CD4-positive, alpha-beta T cell (primary cell): ENCODE measurements at regions of chr1 and their contacts with region 1.

Region 1: DNA sequence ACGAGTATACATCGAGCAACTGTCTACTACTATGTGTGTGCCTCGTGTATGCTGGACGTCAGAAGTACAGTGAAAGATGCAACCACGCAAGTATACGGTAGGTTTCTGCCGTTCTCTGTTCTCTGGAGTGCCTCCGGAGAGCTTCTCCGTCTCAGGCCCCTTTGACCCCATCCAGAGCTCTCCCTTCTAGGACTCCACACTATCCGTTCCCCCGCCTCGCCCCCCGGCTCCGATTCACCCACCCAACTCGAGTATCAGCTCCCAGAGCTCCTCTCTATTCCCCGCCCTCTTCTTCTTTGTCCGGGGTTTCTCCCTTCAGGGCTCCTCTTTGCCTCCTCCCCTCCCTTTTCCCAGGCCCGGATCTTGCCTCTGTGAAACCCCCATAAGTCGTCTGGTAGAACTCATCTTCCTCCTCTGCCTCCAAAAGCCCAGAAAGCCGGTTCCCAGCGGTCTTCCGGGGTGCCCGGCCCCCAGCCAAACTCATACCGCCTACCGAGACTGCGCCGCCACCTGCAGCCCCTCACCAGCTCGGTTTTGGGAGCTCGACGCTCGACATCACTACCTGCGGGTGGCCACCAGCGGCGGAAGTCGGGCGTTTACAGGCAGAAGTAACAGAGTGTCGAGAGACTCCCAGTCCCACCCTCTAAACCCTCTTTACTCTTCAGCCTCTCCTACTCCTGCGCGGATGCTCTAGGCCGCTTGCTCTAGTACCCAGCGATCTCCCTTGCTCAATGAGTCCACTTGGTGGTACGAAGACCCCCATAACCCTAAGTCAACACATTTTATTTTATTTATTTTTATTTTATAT is at the start of gene VPS72:
- DNase-seq: peak; percentile 70 to 93 (median 81)
- ATAC-seq: peak; percentile 90
- H3K4me3 ChIP-seq: peak within 1 kb of the TSS; percentile 75
- H3K4me3 Mint-ChIP-seq: peak within 1 kb of the TSS; percentile 97
- H3K27ac ChIP-seq: peak within 1 kb of the TSS; percentile 58 to 73
- H3K27ac Mint-ChIP-seq: peak within 1 kb of the TSS; percentile 90
- H3K4me1 ChIP-seq: peaks cover 24% of the 10 kb centered on the region
- H3K4me1 Mint-ChIP-seq: peaks cover 42% of the 10 kb centered on the region
- H3K27me3 ChIP-seq: no peaks in the 10 kb centered on the region
- H3K27me3 Mint-ChIP-seq: no peaks in the 10 kb centered on the region
- CTCF ChIP-seq: no peak
- total RNA-seq, gene VPS72: 12.7 to 17.2 TPM

Region 2: DNA sequence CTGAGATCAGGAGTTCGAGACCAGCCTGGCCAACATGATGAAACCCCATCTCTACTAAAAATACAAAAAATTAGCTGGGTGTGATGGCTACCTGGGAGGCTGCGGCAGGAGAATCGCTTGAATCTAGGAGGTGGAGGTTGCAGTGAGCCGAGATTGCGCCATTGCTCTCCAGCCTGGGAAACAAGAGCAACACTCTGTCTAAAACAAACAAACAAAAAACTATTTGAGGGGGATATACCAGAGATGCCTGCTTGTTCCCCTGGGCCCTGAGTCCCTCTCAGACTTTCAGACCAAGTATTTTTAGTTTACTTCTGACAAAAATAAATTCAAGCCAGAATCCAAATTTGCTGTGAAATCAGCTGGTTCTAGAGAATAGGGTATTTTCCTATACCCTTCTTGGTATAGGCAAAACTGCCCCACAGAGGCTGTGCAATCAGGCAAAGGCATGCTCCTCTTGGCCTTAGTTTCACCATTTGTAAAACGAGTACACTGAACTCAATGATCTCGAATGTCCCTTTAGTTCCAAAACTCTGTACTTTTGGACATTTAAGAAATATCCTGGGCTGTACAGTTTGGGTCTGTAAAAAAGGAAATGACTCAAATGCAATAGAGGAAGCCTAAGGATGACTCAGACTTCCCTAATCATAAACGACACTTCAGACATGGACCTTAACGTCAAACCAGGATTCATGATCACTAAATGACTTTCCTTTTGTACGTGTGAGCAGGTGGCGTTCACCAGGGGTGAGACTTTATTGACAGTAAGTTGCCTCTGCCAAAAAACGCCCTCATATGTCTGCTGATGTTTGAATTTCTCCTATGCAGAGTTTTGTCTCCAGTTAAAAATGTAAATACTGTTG is 576.6 kb before region 1 on chr1:
- CTCF ChIA-PET with region 1: no interaction called
- POLR2A ChIA-PET with region 1: no interaction called
- intact Hi-C with region 1: no loop called
- DNase-seq: peak in 10 of 14 experiments; percentile 16 to 84 (median 35)
- ATAC-seq: peak; percentile 26
- H3K4me3 ChIP-seq: no peak overlapping the region
- H3K4me3 Mint-ChIP-seq: peak overlapping the region; percentile 30
- H3K27ac ChIP-seq: peak overlapping the region; percentile 75 to 76
- H3K27ac Mint-ChIP-seq: peak overlapping the region; percentile 80
- H3K4me1 ChIP-seq: peaks cover 60% of the 10 kb centered on the region
- H3K4me1 Mint-ChIP-seq: peaks cover 55% of the 10 kb centered on the region
- H3K27me3 ChIP-seq: no peaks in the 10 kb centered on the region
- H3K27me3 Mint-ChIP-seq: no peaks in the 10 kb centered on the region
- CTCF ChIP-seq: no peak

Region 3: DNA sequence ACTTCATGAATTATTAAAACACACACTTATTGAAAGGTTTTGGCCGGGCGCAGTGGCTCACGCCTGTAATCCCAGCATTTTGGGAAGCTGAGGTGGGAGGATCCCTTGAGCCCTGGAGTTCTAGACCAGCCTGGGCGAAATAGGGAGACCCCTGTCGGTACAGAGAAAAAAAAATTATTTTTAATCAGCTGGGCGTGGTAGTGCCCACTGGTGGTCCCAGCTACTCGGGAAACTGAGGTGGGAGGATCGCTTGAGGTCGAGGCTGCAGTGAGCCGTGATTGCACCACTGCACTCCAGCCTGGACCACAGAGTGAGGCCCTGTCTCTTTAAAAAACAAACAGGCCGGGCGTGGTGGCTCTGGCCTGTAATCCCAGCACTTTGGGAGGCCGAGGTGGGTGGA is 117.6 kb before region 1 on chr1:
- CTCF ChIA-PET with region 1: no interaction called
- POLR2A ChIA-PET with region 1: no interaction called
- intact Hi-C with region 1: no loop called
- DNase-seq: no peak
- ATAC-seq: no peak
- H3K4me3 ChIP-seq: no peak overlapping the region
- H3K4me3 Mint-ChIP-seq: peak overlapping the region; percentile 99
- H3K27ac ChIP-seq: no peak overlapping the region
- H3K27ac Mint-ChIP-seq: peak overlapping the region; percentile 98
- H3K4me1 ChIP-seq: peaks cover 31% of the 10 kb centered on the region
- H3K4me1 Mint-ChIP-seq: peaks cover 30% of the 10 kb centered on the region
- H3K27me3 ChIP-seq: no peaks in the 10 kb centered on the region
- H3K27me3 Mint-ChIP-seq: no peaks in the 10 kb centered on the region
- CTCF ChIP-seq: no peak

Region 4: DNA sequence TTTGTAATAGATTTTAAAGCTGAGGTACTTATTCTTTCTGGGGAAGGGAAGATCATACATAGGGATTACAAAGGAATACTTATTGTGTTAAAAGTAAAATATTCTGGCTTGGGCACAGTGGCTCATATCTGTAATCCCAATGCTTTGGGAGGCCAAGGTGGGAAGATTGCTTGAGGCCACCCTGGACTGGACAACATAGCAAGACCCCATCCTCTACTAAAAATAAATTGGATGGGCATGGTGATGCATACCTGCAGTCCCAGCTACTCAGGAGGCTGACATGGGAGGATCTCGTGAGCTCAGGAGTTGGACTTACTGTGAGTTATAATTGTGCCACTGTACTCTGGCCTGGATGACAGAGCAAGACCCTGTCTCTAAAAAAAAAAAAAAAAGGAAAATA is 91.7 kb before region 1 on chr1:
- CTCF ChIA-PET with region 1: no interaction called
- POLR2A ChIA-PET with region 1: interaction called, 10 read pairs
- intact Hi-C with region 1: no loop called
- DNase-seq: no peak
- ATAC-seq: no peak
- H3K4me3 ChIP-seq: no peak overlapping the region
- H3K4me3 Mint-ChIP-seq: no peak overlapping the region
- H3K27ac ChIP-seq: no peak overlapping the region
- H3K27ac Mint-ChIP-seq: no peak overlapping the region
- H3K4me1 ChIP-seq: no peaks in the 10 kb centered on the region
- H3K4me1 Mint-ChIP-seq: no peaks in the 10 kb centered on the region
- H3K27me3 ChIP-seq: no peaks in the 10 kb centered on the region
- H3K27me3 Mint-ChIP-seq: no peaks in the 10 kb centered on the region
- CTCF ChIP-seq: no peak

Region 5: DNA sequence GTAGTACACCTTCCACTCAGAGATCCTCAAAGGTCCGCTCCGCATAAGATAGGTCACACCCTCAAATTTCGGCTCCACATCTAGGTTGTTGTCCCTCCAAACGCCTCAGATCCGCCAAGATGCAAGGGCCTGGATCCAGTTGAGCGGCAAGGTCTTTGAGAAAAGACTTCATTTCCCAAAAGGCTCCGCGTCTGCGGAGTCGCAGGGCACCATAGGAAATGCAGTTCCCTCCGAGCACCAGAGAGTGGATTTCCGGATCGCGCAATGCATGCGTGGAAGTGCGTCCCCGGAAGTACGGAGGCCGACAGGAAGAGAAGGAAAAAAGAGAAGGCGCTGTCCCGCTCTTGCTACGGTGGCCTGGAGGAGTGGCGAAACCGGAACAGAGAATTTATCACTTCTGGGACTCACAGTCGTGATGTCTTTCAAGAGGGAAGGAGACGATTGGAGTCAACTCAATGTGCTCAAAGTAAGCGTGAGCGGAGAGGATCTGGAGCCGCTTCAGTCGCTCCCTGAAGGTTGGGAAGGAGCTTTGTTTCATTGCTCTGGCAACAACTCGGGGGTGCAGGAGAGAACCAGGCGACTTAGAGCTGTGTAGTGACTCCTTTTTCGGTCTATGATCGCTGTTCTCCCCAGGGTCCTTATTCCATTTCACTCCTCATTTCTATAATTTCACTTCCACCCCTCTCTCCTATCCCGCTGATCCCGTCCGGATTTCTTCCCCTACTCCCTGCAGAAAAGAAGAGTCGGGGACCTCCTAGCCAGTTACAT is 23.9 kb before region 1 on chr1 and contains the starts of genes LYSMD1 and SCNM1:
- CTCF ChIA-PET with region 1: no interaction called
- POLR2A ChIA-PET with region 1: interaction called, 12 read pairs
- intact Hi-C with region 1: loop called in 1 of 2 experiments (anchors 1 kb)
- DNase-seq: peak; percentile 91 to 99 (median 94)
- ATAC-seq: peak; percentile 97
- H3K4me3 ChIP-seq: peak within 1 kb of the TSS; percentile 76
- H3K4me3 Mint-ChIP-seq: peak within 1 kb of the TSS; percentile 93
- H3K27ac ChIP-seq: peak within 1 kb of the TSS; percentile 36 to 42
- H3K27ac Mint-ChIP-seq: peak within 1 kb of the TSS; percentile 89
- H3K4me1 ChIP-seq: peaks cover 33% of the 10 kb centered on the region
- H3K4me1 Mint-ChIP-seq: peaks cover 52% of the 10 kb centered on the region
- H3K27me3 ChIP-seq: no peaks in the 10 kb centered on the region
- H3K27me3 Mint-ChIP-seq: no peaks in the 10 kb centered on the region
- CTCF ChIP-seq: no peak
- total RNA-seq, gene LYSMD1: 0.55 to 0.67 TPM
- total RNA-seq, gene SCNM1: 35.2 to 35.7 TPM

Region 6: GRCh38 chr1:151853411-151853943 is 663.6 kb after region 1 on chr1 and contains the start of gene THEM5:
- CTCF ChIA-PET with region 1: no interaction called
- POLR2A ChIA-PET with region 1: no interaction called
- intact Hi-C with region 1: no loop called
- DNase-seq: no peak
- ATAC-seq: no peak
- H3K4me3 ChIP-seq: no peak within 1 kb of the TSS
- H3K4me3 Mint-ChIP-seq: no peak within 1 kb of the TSS
- H3K27ac ChIP-seq: no peak within 1 kb of the TSS
- H3K27ac Mint-ChIP-seq: no peak within 1 kb of the TSS
- H3K4me1 ChIP-seq: peaks cover 3% of the 10 kb centered on the region
- H3K4me1 Mint-ChIP-seq: no peaks in the 10 kb centered on the region
- H3K27me3 ChIP-seq: no peaks in the 10 kb centered on the region
- H3K27me3 Mint-ChIP-seq: no peaks in the 10 kb centered on the region
- CTCF ChIP-seq: no peak
- total RNA-seq, gene THEM5: not detected